ENCODE measurements at regions of chr2 and their contacts with region 1.

Region 1: DNA sequence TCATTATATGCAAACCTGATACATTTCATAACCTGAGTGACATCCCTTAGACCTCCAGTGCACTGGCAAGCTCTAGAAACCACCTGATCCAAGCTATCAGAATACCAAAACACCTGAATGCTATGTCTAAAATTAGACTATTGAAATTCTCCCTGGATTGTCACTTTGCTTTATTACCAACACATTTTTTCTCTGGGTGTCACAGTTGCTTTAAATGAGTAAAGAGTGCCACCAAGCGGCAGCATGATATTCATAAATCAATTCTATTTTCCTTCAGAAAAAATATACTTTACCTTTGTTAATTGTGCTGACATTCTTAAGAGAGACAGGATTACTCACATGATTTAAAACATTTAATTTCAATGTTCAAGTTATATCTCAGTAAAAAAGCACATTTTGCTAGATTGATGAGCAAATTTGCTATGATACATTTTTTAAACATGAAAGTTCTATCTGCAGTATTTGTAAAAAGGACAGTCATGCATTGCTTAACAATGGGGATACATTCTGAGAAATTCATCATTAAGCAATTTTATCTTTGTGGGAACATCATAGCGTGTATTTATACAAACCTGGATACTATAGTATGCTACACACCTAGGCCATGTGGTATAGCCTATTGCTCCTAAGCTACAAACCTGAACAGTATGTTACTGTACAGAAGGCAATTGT is 338.4 kb upstream of the SLC39A10 start:
- DNase-seq: peak in 2 of 10 donors; percentile 17 to 34

Region 2: DNA sequence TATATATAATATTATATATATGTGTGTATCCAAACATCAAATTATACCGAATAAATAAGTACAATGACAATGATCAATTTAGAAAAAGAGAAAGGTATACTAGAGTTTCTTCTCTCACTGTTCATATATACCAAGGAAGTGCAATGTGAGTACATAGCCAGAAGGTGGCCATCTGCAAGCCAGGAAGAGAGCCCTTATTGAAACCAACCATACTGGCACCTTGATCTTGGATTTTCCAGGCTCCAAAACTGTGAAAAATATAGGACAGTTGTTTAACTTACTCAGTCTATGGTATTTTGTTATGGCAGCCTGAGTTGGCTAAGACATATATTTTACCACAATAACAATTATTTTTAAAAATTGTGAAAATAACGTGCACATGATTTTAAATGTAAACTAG is 1151.8 kb before region 1 on chr2:
- intact Hi-C with region 1: loop called (anchors 10 kb)
- DNase-seq: no peak

Region 3: DNA sequence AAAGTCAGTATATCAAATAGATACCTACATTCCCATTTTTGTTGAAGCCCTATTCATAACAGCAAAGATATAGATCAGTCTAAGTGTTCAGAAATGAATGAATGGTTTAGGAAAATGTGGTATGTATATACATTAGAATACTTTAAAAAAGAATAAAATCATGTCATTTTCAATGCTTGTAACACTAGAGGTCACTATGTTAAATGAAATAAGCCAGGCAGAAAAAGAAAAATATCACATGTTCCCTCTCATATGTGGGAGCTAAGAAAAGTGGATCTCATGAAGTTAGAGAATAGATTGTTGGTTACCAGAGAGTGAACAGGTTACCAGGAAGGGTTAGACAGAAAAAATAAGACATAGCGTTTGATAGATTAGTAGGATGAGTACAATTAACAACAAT is 772.6 kb before region 1 on chr2:
- intact Hi-C with region 1: loop called (anchors 5 kb)
- DNase-seq: no peak

Region 4: DNA sequence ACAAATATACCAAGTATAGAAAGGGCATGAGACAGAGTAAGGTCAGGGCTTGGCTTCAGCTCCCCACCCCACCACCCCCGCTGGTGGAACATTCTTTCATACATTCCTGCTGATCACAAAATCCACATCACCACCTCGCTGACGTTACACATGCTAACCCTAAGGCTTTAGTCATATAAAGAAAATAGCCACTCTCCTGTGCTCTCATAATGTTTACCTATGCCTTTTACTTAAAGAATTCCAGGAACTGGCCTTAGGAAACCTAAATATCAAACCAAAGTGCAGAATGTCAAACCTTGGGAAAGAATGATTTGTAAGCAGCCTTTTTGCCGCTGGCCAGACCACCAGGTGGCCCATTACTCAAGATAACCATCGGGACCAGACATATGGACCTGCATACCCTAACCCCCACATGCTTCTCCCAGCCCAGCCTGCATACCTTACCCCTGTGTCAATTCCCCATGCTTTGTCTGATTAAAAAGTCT is 202.1 kb after region 1 on chr2:
- intact Hi-C with region 1: no loop called
- DNase-seq: no peak

Region 5: GRCh38 chr2:195903956-195904355 is 585.4 kb after region 1 on chr2:
- intact Hi-C with region 1: no loop called
- DNase-seq: no peak

Measured in posterior cingulate gyrus (tissue), 11 donors.